Astrocyte of the cerebellum (primary cell): ENCODE measurements at regions of chr10 and their contacts with region 1.

Region 1: GRCh38 chr10:59181668-59182067 is 5.2 kb downstream of the PHYHIPL start:
- DNase-seq: peak; percentile 68
- H3K4me3 ChIP-seq: no peak overlapping the region
- CTCF ChIP-seq: peak; percentile 66

Region 2: DNA sequence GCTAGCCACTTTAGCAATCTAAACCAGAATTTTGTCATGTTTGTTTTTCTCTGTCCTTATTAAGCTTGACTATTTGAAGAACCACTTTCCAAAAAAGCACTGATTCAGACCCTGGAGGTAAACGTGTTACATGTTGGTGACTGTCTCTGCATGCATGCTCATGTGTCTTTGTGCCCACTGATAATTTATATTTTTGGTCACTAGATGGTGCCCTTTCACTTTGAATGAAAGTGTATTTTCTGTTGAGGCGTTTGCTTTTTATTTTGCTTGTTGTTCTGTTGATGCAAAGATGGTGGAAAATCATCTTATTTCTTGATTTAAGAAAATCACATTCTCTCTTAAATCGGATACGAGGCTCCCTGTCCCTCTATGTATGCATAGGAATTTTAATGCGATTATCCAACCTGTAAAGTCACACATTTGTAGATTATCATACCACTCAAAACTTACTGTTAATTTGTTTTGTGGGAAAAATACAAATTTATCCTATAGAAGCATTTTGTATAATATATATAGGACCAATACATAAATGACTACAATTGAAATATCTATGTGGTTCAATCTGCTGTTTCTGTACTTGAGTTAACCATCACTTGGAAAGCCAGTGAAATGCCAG is 399.7 kb before region 1 on chr10:
- in situ Hi-C with region 1: loop called (anchors 25 kb)
- DNase-seq: peak; percentile 27
- H3K4me3 ChIP-seq: no peak overlapping the region
- CTCF ChIP-seq: peak; percentile 54

Region 3: DNA sequence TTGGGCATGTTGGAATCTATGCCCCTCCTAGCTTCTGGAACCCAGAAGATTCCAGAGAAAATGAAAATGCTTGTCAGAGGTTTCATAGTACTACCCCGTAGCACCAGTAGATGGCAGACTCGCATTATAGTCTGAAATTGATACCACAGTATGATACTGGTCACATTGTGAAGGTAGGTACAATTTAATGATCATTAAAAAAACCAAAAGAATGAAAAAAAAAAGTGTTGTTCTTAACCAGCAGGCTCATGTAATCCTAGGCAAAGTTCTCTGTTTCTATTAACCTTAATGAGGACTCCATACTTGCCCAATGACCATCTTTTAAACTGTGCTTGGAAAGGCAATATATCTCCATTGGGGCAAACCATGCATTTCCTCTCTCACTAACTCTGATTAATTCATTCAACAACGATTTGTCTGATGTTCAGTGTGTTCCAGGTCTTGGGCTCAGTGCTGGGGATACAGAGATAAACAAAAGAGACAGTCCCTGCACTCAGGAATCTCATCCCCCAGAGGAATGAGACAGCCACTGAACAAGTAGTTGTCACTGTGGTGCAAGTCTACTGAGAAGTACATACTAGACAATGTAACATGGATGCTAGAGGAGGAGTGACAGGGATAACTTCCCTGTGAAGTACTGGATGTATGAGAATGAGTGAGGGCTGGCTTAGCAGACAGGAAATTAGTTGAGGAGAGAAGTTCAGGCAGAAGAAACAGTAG is 228.8 kb before region 1 on chr10:
- in situ Hi-C with region 1: loop called (anchors 25 kb)
- DNase-seq: peak; percentile 44
- H3K4me3 ChIP-seq: no peak overlapping the region
- CTCF ChIP-seq: peak; percentile 75